GM12878 (cell line): ENCODE measurements at regions of chr12 and their contacts with region 1.

Region 1: DNA sequence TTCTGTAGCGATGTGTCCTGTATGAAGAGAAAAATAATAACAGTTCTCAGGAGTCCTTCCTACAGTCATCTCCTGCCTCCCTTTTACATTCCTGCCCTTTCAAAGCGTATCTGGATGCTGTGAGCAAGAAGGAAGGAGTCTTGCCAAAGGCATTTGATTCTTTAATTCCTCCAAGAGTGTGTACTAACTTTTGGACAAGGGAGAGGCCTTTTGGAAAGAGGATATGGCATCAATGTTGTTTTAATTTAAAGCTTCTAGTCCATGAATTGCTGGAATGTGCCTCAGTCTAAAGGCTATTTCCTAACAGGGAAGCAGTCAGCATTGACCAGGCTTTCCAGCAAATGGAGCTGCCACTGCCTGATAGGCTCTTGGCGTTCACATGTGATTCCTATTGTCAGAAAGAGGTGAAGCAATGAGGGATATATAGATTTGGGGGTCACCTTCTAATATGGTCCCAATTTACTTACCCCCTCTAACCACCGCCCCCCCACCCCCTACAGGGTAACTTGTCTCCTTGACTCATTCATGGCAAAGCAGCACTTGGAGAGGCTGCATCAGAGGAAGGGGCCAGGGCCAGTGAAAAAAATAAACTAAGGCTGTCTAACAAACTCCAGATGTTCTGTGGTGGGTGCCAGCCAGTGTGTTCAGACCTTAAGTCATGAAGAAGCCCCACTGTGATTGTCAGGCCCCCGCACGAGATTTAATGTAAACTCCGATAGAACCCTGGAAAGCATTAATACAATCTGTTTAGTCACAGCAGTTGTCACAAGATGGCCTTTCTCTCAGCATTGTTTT is 220.3 kb downstream of the FBXL14 start:
- DNase-seq: no peak
- ATAC-seq: no peak
- H3K4me3 ChIP-seq: no peak overlapping the region
- H3K27ac ChIP-seq: no peak overlapping the region
- H3K4me1 ChIP-seq: no peaks in the 10 kb centered on the region
- H3K27me3 ChIP-seq: no peaks in the 10 kb centered on the region
- CTCF ChIP-seq: no peak
- EP300 ChIP-seq: no peak
- POLR2A ChIP-seq: no peak
- RAD21 ChIP-seq: no peak

Region 2: DNA sequence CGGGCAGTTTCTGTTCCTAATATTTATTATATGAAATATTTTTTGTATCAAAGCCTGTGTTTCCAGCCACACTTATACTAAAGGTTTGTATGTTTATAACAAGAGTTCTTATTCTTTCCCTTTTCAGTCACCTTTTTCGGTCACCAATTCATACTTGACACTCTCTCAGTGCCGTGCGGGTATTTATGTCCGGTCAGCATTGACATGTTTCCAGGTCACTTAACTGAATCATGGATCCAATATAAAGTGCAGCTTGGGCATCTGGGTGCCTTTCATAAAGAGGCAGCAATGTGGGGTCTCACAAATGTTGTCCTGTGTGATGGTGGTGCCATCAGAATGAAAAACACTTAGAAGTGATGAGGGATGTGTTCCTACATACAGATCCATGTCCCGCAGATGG is 241.8 kb before region 1 on chr12:
- CTCF ChIA-PET with region 1: no interaction called
- POLR2A ChIA-PET with region 1: no interaction called
- RAD21 ChIA-PET with region 1: no interaction called
- SMC1A ChIA-PET with region 1: no interaction called
- in situ Hi-C with region 1: no loop called
- intact Hi-C with region 1: no loop called
- DNase-seq: no peak
- ATAC-seq: no peak
- H3K4me3 ChIP-seq: no peak overlapping the region
- H3K27ac ChIP-seq: no peak overlapping the region
- H3K4me1 ChIP-seq: no peaks in the 10 kb centered on the region
- H3K27me3 ChIP-seq: no peaks in the 10 kb centered on the region
- CTCF ChIP-seq: no peak
- EP300 ChIP-seq: no peak
- POLR2A ChIP-seq: no peak
- RAD21 ChIP-seq: no peak

Region 3: GRCh38 chr12:1357171-1357570 is 16.9 kb before region 1 on chr12:
- CTCF ChIA-PET with region 1: interaction called, 8 read pairs
- POLR2A ChIA-PET with region 1: no interaction called
- RAD21 ChIA-PET with region 1: interaction called, 3 read pairs
- SMC1A ChIA-PET with region 1: interaction called, 10 read pairs
- in situ Hi-C with region 1: no loop called
- intact Hi-C with region 1: no loop called
- DNase-seq: no peak
- ATAC-seq: no peak
- H3K4me3 ChIP-seq: no peak overlapping the region
- H3K27ac ChIP-seq: no peak overlapping the region
- H3K4me1 ChIP-seq: no peaks in the 10 kb centered on the region
- H3K27me3 ChIP-seq: no peaks in the 10 kb centered on the region
- CTCF ChIP-seq: no peak
- EP300 ChIP-seq: no peak
- POLR2A ChIP-seq: no peak
- RAD21 ChIP-seq: no peak